ENCODE measurements at regions of chr2 and their contacts with region 1.

Region 1: GRCh38 chr2:10668402-10669012 is 21.3 kb downstream of the NOL10 start:
- DNase-seq: peak; percentile 39
- H3K4me3 ChIP-seq: no peak overlapping the region
- H3K27ac ChIP-seq: no peak overlapping the region
- H3K4me1 ChIP-seq: no peaks in the 10 kb centered on the region
- H3K27me3 ChIP-seq: no peaks in the 10 kb centered on the region
- CTCF ChIP-seq: peak; percentile 61 to 68

Region 2: GRCh38 chr2:10006236-10007161 is 662.0 kb before region 1 on chr2:
- CTCF ChIA-PET with region 1: no interaction called
- dilution Hi-C with region 1: no loop called
- in situ Hi-C with region 1: no loop called
- intact Hi-C with region 1: no loop called
- DNase-seq: peak; percentile 16
- H3K4me3 ChIP-seq: no peak overlapping the region
- H3K27ac ChIP-seq: no peak overlapping the region
- H3K4me1 ChIP-seq: peaks cover 7% of the 10 kb centered on the region
- H3K27me3 ChIP-seq: no peaks in the 10 kb centered on the region
- CTCF ChIP-seq: no peak

Region 3: DNA sequence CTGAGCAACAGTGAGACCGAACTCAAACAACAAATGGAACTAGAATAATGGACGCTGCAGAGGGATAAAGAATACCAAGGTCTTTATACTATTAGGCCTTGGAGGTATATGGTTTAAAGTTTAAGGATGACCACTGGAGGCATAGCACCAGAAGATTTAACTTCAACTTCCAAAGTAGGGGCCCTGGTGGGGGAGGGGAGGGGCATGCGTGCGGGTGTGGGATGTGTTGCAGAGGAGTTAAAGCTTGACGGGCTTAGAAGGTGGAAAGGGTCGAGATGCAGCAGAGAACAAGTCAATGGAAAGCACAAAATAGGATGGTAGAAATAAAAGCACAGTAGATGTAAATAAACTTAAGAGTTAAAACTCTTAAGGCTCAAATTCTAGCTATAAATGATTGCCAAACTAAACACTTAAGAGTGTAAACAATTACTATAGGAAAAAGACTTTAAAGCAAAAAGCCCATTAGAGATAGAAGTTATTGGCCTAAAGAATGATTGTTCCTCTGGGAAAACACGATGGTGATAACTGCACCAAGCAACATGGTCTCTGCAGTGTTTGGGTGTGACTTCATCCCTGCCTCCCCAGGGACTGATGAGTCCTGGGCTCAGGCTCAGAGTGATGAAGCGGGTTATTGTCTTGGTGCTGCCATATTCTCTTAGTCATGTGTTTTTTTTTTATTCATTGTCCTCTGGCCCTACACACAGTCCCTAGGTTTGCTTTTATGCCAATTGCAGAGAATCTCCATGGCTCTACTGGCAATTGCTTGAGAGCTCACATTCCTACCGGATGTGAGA is 533.0 kb before region 1 on chr2:
- CTCF ChIA-PET with region 1: no interaction called
- dilution Hi-C with region 1: no loop called
- in situ Hi-C with region 1: loop called (anchors 25 kb)
- intact Hi-C with region 1: loop called (anchors 5 kb)
- DNase-seq: peak; percentile 57
- H3K4me3 ChIP-seq: no peak overlapping the region
- H3K27ac ChIP-seq: no peak overlapping the region
- H3K4me1 ChIP-seq: peaks cover 24% of the 10 kb centered on the region
- H3K27me3 ChIP-seq: no peaks in the 10 kb centered on the region
- CTCF ChIP-seq: no peak

Region 4: DNA sequence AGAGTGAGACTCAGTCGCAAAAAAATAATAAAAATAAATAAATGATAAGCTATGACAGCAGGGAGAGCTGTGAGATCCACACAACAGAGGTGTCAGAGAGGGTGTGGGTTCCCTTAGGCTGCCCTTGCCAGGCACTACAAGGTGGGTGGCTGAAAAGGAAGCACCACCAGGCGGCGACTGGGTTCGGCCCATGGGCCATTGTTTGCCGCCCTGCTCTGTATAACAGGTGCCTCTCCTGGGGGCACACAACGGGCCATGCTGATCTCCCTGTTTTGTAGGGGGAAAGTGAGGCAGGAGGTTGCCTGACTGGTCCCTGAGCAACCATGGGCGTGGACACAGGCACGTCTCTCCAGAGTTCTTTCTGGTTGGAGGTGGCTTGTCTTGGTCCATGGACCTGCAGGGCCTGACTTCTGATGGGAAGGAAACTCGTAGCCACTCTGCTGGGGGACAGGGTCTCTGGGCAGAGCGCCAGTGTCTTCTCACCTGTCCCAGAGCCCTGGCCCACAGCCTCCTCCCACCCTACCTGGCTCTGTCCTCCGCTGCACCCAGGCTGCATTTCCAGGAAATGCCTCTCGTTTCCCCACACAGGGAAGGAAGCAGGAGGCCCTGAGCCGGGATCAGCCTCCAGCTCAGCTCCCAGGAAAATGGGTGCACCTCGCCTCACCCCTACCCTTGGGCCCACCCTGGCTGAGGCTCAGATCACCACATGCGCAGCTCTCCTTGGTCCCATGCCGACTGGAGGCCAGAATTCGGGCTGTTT is 110.8 kb before region 1 on chr2:
- CTCF ChIA-PET with region 1: no interaction called
- dilution Hi-C with region 1: no loop called
- in situ Hi-C with region 1: no loop called
- intact Hi-C with region 1: loop called (anchors 5 kb)
- DNase-seq: no peak
- H3K4me3 ChIP-seq: no peak overlapping the region
- H3K27ac ChIP-seq: no peak overlapping the region
- H3K4me1 ChIP-seq: no peaks in the 10 kb centered on the region
- H3K27me3 ChIP-seq: no peaks in the 10 kb centered on the region
- CTCF ChIP-seq: no peak

Region 5: GRCh38 chr2:10566018-10566417 is 102.5 kb before region 1 on chr2:
- CTCF ChIA-PET with region 1: no interaction called
- dilution Hi-C with region 1: loop called (anchors 5 kb)
- in situ Hi-C with region 1: no loop called
- intact Hi-C with region 1: no loop called
- DNase-seq: no peak
- H3K4me3 ChIP-seq: no peak overlapping the region
- H3K27ac ChIP-seq: no peak overlapping the region
- H3K4me1 ChIP-seq: peaks cover 2% of the 10 kb centered on the region
- H3K27me3 ChIP-seq: no peaks in the 10 kb centered on the region
- CTCF ChIP-seq: no peak

Measured in mammary epithelial cell (primary cell).